Caco-2 (cell line): ENCODE measurements at regions of chr20 and their contacts with region 1.

Region 1: GRCh38 chr20:36573103-36573794 is at the start of gene TGIF2:
- DNase-seq: peak; percentile 96 to 99
- H3K4me3 ChIP-seq: peak within 1 kb of the TSS; percentile 82
- H3K4me3 Mint-ChIP-seq: peak within 1 kb of the TSS; percentile 79
- H3K27ac Mint-ChIP-seq: peak within 1 kb of the TSS; percentile 63
- H3K4me1 ChIP-seq: peaks cover 29% of the 10 kb centered on the region
- H3K4me1 Mint-ChIP-seq: peaks cover 12% of the 10 kb centered on the region
- H3K27me3 ChIP-seq: no peaks in the 10 kb centered on the region
- H3K27me3 Mint-ChIP-seq: no peaks in the 10 kb centered on the region
- CTCF ChIP-seq: no peak
- total RNA-seq, gene TGIF2: 58.4 and 60.6 TPM in 2 replicates

Region 2: GRCh38 chr20:36331006-36331608 is 242.1 kb before region 1 on chr20:
- CTCF ChIA-PET with region 1: no interaction called
- POLR2A ChIA-PET with region 1: no interaction called
- intact Hi-C with region 1: no loop called
- DNase-seq: no peak
- H3K4me3 ChIP-seq: no peak overlapping the region
- H3K4me3 Mint-ChIP-seq: no peak overlapping the region
- H3K27ac Mint-ChIP-seq: no peak overlapping the region
- H3K4me1 ChIP-seq: peaks cover 9% of the 10 kb centered on the region
- H3K4me1 Mint-ChIP-seq: no peaks in the 10 kb centered on the region
- H3K27me3 ChIP-seq: peaks cover 3% of the 10 kb centered on the region; the same call in 1 of the 2 replicates
- H3K27me3 Mint-ChIP-seq: peaks cover 33% of the 10 kb centered on the region
- CTCF ChIP-seq: no peak

Region 3: DNA sequence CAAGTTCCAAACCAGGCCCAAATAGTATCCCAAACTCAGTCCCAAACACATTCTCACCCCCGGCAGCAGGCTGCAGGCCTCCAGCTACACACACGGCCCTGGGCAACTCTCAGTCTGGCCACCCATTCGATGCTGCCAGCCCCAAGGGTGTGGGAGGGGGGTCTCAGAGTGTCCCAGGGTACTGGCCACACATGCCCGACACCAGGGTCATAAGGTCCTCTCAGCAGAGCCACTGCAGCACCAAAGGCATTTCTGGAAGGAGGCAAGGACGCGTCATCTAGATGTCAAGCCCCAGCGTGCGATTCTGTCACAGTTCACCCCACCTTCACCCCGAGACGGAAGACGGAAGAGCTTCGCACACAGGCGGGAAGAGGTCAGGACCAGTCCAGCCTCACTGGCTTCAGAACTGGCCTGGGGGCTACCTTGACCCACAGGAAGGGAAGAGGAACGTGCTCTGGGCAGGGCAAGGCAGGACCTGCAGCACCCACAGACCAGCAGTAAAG is 22.4 kb before region 1 on chr20:
- CTCF ChIA-PET with region 1: no interaction called
- POLR2A ChIA-PET with region 1: no interaction called
- intact Hi-C with region 1: loop called (anchors 2 kb)
- DNase-seq: no peak
- H3K4me3 ChIP-seq: no peak overlapping the region
- H3K4me3 Mint-ChIP-seq: no peak overlapping the region
- H3K27ac Mint-ChIP-seq: no peak overlapping the region
- H3K4me1 ChIP-seq: no peaks in the 10 kb centered on the region
- H3K4me1 Mint-ChIP-seq: no peaks in the 10 kb centered on the region
- H3K27me3 ChIP-seq: no peaks in the 10 kb centered on the region
- H3K27me3 Mint-ChIP-seq: peaks cover 2% of the 10 kb centered on the region
- CTCF ChIP-seq: no peak

Region 4: GRCh38 chr20:36562724-36563123 is 10.5 kb before region 1 on chr20:
- CTCF ChIA-PET with region 1: interaction called, 7 read pairs
- POLR2A ChIA-PET with region 1: interaction called, 3 read pairs
- intact Hi-C with region 1: loop called (anchors 1 kb)
- DNase-seq: no peak
- H3K4me3 ChIP-seq: no peak overlapping the region
- H3K4me3 Mint-ChIP-seq: no peak overlapping the region
- H3K27ac Mint-ChIP-seq: no peak overlapping the region
- H3K4me1 ChIP-seq: peaks cover 8% of the 10 kb centered on the region; the same call in 1 of the 2 replicates
- H3K4me1 Mint-ChIP-seq: peaks cover 7% of the 10 kb centered on the region
- H3K27me3 ChIP-seq: no peaks in the 10 kb centered on the region
- H3K27me3 Mint-ChIP-seq: no peaks in the 10 kb centered on the region
- CTCF ChIP-seq: no peak

Region 5: GRCh38 chr20:36653456-36653855 is 80.2 kb after region 1 on chr20:
- CTCF ChIA-PET with region 1: no interaction called
- POLR2A ChIA-PET with region 1: no interaction called
- intact Hi-C with region 1: no loop called
- DNase-seq: no peak
- H3K4me3 ChIP-seq: no peak overlapping the region
- H3K4me3 Mint-ChIP-seq: no peak overlapping the region
- H3K27ac Mint-ChIP-seq: no peak overlapping the region
- H3K4me1 ChIP-seq: no peaks in the 10 kb centered on the region
- H3K4me1 Mint-ChIP-seq: no peaks in the 10 kb centered on the region
- H3K27me3 ChIP-seq: no peaks in the 10 kb centered on the region
- H3K27me3 Mint-ChIP-seq: no peaks in the 10 kb centered on the region
- CTCF ChIP-seq: no peak